GM12878 (cell line): ENCODE measurements at regions of chr11 and their contacts with region 1.

Region 1: GRCh38 chr11:12235947-12236743 is 125.8 kb downstream of the MICAL2 start:
- DNase-seq: peak; percentile 48
- ATAC-seq: peak; percentile 93
- H3K4me3 ChIP-seq: no peak overlapping the region
- H3K27ac ChIP-seq: 0 out of 2 replicates have a peak overlapping the region, but pooled peaks have one; percentile 1
- H3K4me1 ChIP-seq: peaks cover 7% of the 10 kb centered on the region
- H3K27me3 ChIP-seq: no peaks in the 10 kb centered on the region
- CTCF ChIP-seq: peak; percentile 52 to 72 (median 67)
- EP300 ChIP-seq: 0 out of 4 replicates have a peak, but pooled peaks of 1 of the 2 experiments have one; percentile 31
- POLR2A ChIP-seq: no peak
- RAD21 ChIP-seq: peak; percentile 82

Region 2: GRCh38 chr11:12052676-12053605 is 183.2 kb before region 1 on chr11:
- CTCF ChIA-PET with region 1: interaction called, 104 read pairs
- POLR2A ChIA-PET with region 1: no interaction called
- RAD21 ChIA-PET with region 1: interaction called, 19 read pairs
- SMC1A ChIA-PET with region 1: interaction called, 26 read pairs
- in situ Hi-C with region 1: loop called (anchors 5 kb)
- intact Hi-C with region 1: no loop called
- DNase-seq: no peak
- ATAC-seq: no peak; the same call in 2 of the 3 replicates
- H3K4me3 ChIP-seq: no peak overlapping the region
- H3K27ac ChIP-seq: no peak overlapping the region
- H3K4me1 ChIP-seq: no peaks in the 10 kb centered on the region
- H3K27me3 ChIP-seq: no peaks in the 10 kb centered on the region
- CTCF ChIP-seq: peak in 1 of 3 experiments; percentile 21; a peak in 1 of 6 replicates
- EP300 ChIP-seq: no peak
- POLR2A ChIP-seq: no peak
- RAD21 ChIP-seq: 0 out of 2 replicates have a peak, but pooled peaks have one; percentile 17

Region 3: DNA sequence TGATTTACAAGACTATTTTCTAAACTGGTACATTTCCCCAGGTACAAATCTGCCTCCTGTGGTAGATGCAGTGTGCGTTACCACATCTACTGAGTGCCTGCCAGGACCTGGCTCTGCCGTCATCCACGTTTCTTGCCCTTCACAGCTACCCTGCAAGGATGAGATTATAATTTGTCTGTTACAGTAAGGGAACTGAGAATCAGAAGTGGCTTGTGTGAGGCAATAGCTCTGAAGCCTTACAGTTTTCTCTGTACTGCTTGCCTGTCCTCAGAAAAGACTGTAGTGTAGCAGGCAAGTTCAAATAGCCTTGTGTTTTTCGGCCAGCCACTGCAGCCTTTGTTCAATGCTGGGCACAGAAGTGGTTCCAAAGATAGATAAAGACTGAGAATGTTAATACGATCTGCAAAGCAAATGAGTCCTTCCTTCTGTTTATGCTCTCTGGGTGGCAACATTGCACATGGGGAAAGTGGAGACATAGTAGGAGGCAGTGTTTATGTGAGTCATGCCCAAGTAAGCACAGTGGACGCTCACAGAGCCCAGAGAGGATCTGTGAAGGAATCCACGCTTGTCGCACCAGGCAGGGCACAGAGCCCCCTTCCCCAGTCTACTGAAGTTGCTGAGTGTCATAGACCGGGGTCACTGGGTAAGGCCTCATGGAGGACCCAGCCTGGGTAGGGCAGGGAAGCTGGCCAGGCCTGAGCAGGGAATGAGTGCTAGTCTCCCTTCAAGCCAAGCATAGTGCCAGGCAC is 76.6 kb before region 1 on chr11:
- CTCF ChIA-PET with region 1: interaction called, 47 read pairs
- POLR2A ChIA-PET with region 1: no interaction called
- RAD21 ChIA-PET with region 1: interaction called, 22 read pairs
- SMC1A ChIA-PET with region 1: interaction called, 17 read pairs
- in situ Hi-C with region 1: no loop called
- intact Hi-C with region 1: loop called (anchors 1 kb)
- DNase-seq: no peak
- ATAC-seq: peak; percentile 46
- H3K4me3 ChIP-seq: no peak overlapping the region
- H3K27ac ChIP-seq: no peak overlapping the region
- H3K4me1 ChIP-seq: no peaks in the 10 kb centered on the region
- H3K27me3 ChIP-seq: no peaks in the 10 kb centered on the region
- CTCF ChIP-seq: no peak
- EP300 ChIP-seq: no peak
- POLR2A ChIP-seq: no peak
- RAD21 ChIP-seq: no peak

Region 4: DNA sequence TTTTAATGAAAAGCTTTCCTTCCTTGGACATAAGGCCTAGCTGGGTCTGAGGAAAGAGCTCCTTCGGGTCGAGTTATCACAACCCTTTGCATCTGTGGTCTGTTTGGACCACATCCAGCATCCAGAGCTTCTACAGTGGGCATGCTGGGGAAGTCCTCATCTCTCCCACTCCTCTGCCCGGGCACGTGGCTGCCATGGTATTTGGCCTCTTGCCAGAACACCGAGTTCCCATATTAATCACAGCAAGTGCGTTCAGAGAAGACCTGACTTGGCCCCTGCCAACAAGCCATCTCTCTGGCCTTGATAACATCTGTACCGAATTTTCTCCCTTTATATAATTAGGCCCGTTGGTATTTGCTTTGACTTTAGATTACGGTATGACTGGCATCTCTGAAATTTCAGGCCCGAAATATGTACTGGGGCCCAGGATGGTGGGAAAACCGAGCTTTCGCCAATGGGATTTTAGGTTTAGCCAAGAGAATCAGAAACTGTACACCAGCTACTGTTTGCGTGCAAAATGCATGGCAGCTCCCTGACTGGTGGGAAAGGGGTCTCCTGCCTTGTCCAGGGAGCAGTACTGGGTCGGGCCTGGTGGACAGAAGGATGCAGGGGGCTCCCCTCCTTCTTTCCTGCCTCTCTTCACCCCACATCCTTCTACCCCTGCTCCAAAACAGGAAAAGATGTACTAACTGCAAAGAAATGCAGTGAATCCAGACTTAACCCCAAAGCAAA is 35.7 kb before region 1 on chr11:
- CTCF ChIA-PET with region 1: interaction called, 11 read pairs
- POLR2A ChIA-PET with region 1: no interaction called
- RAD21 ChIA-PET with region 1: interaction called, 6 read pairs
- SMC1A ChIA-PET with region 1: interaction called, 12 read pairs
- in situ Hi-C with region 1: no loop called
- intact Hi-C with region 1: no loop called
- DNase-seq: no peak
- ATAC-seq: no peak
- H3K4me3 ChIP-seq: no peak overlapping the region
- H3K27ac ChIP-seq: no peak overlapping the region
- H3K4me1 ChIP-seq: peaks cover 23% of the 10 kb centered on the region
- H3K27me3 ChIP-seq: no peaks in the 10 kb centered on the region
- CTCF ChIP-seq: no peak
- EP300 ChIP-seq: no peak
- POLR2A ChIP-seq: no peak
- RAD21 ChIP-seq: no peak

Region 5: GRCh38 chr11:12281571-12282478 is 45.7 kb after region 1 on chr11:
- CTCF ChIA-PET with region 1: interaction called, 56 read pairs
- POLR2A ChIA-PET with region 1: no interaction called
- RAD21 ChIA-PET with region 1: interaction called, 15 read pairs
- SMC1A ChIA-PET with region 1: interaction called, 16 read pairs
- in situ Hi-C with region 1: no loop called
- intact Hi-C with region 1: loop called (anchors 2 kb)
- DNase-seq: peak; percentile 21
- ATAC-seq: peak; percentile 89
- H3K4me3 ChIP-seq: no peak overlapping the region
- H3K27ac ChIP-seq: no peak overlapping the region
- H3K4me1 ChIP-seq: no peaks in the 10 kb centered on the region
- H3K27me3 ChIP-seq: no peaks in the 10 kb centered on the region; a peak in 1 of 4 replicates
- CTCF ChIP-seq: peak; percentile 87 to 95 (median 93)
- EP300 ChIP-seq: no peak
- POLR2A ChIP-seq: no peak
- RAD21 ChIP-seq: peak; percentile 100